ENCODE measurements at regions of chr1 and their contacts with region 1.

Region 1: GRCh38 chr1:24150234-24151174 is 7.6 kb upstream of the IL22RA1 start:
- DNase-seq: peak; percentile 76 to 89
- ATAC-seq: peak; percentile 95 to 98
- H3K4me3 ChIP-seq: peak overlapping the region; percentile 34
- H3K27ac ChIP-seq: peak overlapping the region; percentile 65 to 83
- H3K4me1 ChIP-seq: peaks cover 12% of the 10 kb centered on the region
- CTCF ChIP-seq: peak; percentile 64
- EP300 ChIP-seq: no peak
- POLR2A ChIP-seq: no peak
- RAD21 ChIP-seq: peak; percentile 58 to 65

Region 2: DNA sequence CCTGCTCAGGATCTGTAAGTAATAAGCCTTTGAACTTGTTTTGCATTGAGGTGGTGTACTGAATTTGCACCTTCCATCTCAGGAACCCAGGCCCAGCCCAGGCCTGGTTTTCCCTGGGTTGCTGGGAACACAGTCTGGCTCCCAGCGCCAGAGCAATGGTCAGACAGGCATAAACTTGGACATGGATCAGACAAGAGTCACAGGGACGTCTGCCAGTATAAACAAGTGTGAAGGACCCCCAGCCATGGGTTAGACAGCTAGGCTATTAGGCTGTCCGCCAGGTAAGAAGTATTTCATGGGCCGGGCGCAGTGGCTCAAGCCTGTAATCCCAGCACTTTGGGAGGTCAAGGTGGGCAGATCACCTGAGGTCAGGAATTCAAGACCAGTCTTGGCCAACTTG is 31.1 kb after region 1 on chr1:
- CTCF ChIA-PET with region 1: interaction called, 29 read pairs
- POLR2A ChIA-PET with region 1: no interaction called
- DNase-seq: no peak
- ATAC-seq: no peak
- H3K4me3 ChIP-seq: no peak overlapping the region
- H3K27ac ChIP-seq: no peak overlapping the region
- H3K4me1 ChIP-seq: no peaks in the 10 kb centered on the region
- CTCF ChIP-seq: no peak
- EP300 ChIP-seq: no peak
- POLR2A ChIP-seq: no peak
- RAD21 ChIP-seq: no peak

Region 3: DNA sequence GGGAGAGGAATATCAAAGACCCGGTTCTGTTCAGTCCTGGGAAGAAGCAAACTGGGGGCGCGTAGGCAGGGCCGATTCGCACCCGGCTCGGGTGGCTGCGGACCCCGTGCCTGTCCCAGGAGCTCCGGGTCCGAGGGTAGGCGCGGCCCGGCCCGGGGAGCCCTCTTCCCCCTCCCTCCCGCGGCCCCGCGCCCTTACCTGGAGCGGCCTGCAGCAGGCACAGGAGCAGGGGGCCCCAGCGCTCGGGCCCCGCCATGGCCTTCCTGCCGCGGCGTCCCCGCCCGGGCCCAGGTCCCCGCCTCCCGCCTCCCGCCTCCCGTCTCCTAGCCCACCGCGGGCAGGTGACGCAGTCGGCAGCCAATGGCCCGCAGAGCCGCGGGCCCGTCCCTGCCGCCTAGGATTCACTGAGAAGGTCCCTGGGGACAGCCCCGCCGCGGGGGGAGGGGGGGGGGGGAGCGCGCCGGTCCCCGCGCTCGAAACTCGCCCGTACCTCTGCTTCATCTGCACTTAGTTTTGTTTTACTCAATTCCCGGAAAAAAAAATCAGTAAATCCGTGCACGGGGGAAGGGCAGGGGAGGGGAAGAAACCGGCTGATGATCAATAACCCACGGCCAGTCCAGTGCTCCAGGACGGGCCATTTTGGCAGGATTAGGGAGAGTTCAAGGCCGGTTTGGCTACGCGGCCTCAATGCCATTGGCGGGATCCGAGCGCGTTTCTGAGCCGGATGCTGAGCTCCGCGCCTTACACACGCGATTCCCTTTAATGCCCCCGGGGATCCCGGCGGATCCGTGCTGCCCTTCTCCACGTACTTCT is 36.7 kb after region 1 on chr1 and contains the start of gene IFNLR1:
- CTCF ChIA-PET with region 1: interaction called, 29 read pairs
- POLR2A ChIA-PET with region 1: no interaction called
- DNase-seq: peak; percentile 26 to 44
- ATAC-seq: peak; percentile 67 to 82
- H3K4me3 ChIP-seq: peak within 1 kb of the TSS; percentile 59
- H3K27ac ChIP-seq: peak within 1 kb of the TSS; percentile 67 to 92
- H3K4me1 ChIP-seq: peaks cover 25% of the 10 kb centered on the region
- CTCF ChIP-seq: no peak
- EP300 ChIP-seq: no peak
- POLR2A ChIP-seq: no peak
- RAD21 ChIP-seq: no peak
- polyA plus RNA-seq, gene IFNLR1: 1.3 and 1.7 TPM in 2 replicates